ENCODE measurements at regions of chr15 and their contacts with region 1.

Region 1: DNA sequence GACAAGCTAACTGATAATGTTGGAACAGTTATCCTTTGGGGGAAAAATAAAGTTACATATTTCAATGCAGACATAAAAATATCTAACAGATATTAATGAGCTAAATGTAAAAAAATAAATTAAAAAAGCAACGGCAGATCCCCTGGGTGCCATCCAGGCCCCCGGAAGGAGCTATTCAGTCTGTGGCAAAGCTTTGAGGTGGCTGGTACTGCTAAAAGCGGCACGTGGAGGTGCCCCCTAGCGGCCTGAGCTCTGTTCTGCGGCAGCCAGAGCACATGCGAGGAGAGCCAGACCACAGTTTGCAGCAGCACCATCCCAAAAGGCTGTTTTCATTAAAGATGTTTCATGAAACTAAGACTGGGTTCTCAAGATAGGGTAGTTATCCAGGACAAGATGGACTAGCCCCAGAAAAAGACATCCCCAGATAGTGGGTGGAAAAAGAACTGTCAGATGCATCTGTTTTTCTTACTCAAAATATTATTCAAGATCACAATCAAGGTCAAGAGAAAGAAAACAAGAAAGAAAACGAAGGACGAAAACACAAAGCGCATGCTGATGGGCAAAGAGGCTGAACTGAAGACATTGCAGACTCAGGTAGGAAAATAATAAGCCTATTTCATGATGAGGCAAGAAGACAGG is 18.7 kb downstream of the AP3S2 start:
- DNase-seq: peak; percentile 84
- H3K4me3 Mint-ChIP-seq: no peak overlapping the region
- H3K27ac Mint-ChIP-seq: no peak overlapping the region
- H3K4me1 Mint-ChIP-seq: peaks cover 5% of the 10 kb centered on the region
- H3K27me3 Mint-ChIP-seq: no peaks in the 10 kb centered on the region

Region 2: GRCh38 chr15:89740137-89740536 is 134.9 kb before region 1 on chr15:
- CTCF ChIA-PET with region 1: interaction called, 77 read pairs
- POLR2A ChIA-PET with region 1: interaction called, 4 read pairs
- DNase-seq: peak; percentile 55
- H3K4me3 Mint-ChIP-seq: no peak overlapping the region
- H3K27ac Mint-ChIP-seq: no peak overlapping the region
- H3K4me1 Mint-ChIP-seq: peaks cover 1% of the 10 kb centered on the region
- H3K27me3 Mint-ChIP-seq: peaks cover 5% of the 10 kb centered on the region

Region 3: GRCh38 chr15:89760303-89761008 is 114.6 kb before region 1 on chr15:
- CTCF ChIA-PET with region 1: interaction called, 168 read pairs
- POLR2A ChIA-PET with region 1: interaction called, 6 read pairs
- DNase-seq: peak; percentile 77
- H3K4me3 Mint-ChIP-seq: no peak overlapping the region
- H3K27ac Mint-ChIP-seq: no peak overlapping the region
- H3K4me1 Mint-ChIP-seq: peaks cover 6% of the 10 kb centered on the region
- H3K27me3 Mint-ChIP-seq: peaks cover 8% of the 10 kb centered on the region

Region 4: DNA sequence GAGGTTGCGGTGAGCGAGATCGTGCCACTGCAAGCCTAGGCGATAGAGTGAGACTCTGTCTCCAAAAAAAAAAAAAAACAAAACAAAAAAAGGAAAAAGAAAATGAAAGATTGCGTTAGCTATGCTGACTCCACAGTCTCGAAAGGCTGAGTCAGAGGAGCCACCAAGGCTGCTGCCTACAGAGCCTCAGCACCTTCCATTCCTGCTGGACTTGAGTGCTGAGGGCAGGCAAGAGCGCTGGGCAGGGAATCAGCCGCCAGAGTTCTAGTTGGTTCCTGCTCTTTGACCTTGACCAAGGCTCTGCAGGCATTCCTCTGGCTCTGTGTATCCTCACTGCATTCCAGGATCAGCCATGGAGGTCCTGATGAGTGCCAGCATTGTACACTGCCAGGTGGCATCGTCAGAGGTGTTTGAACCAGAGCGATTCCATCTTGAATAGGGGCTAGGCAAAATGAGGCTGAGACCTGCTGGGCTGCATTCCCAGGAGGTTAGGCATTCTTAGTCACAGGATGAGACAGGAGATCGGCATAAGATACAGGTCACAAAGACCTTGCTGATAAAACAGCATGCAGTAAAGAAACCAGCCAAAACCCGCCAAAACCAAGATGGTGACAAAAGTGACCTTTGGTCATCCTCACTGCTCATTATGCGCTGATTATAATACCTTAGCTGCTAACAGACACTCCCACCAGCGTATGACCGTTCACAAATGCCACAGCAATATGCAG is 93.0 kb before region 1 on chr15:
- CTCF ChIA-PET with region 1: interaction called, 13 read pairs
- POLR2A ChIA-PET with region 1: no interaction called
- DNase-seq: peak; percentile 38
- H3K4me3 Mint-ChIP-seq: no peak overlapping the region
- H3K27ac Mint-ChIP-seq: no peak overlapping the region
- H3K4me1 Mint-ChIP-seq: peaks cover 30% of the 10 kb centered on the region
- H3K27me3 Mint-ChIP-seq: no peaks in the 10 kb centered on the region

Region 5: GRCh38 chr15:89857673-89858072 is 17.4 kb before region 1 on chr15:
- CTCF ChIA-PET with region 1: interaction called, 14 read pairs
- POLR2A ChIA-PET with region 1: interaction called, 3 read pairs
- DNase-seq: no peak
- H3K4me3 Mint-ChIP-seq: no peak overlapping the region
- H3K27ac Mint-ChIP-seq: no peak overlapping the region
- H3K4me1 Mint-ChIP-seq: peaks cover 11% of the 10 kb centered on the region
- H3K27me3 Mint-ChIP-seq: no peaks in the 10 kb centered on the region

Region 6: GRCh38 chr15:89893696-89894455 is 18.8 kb after region 1 on chr15 and contains the start of gene AP3S2:
- CTCF ChIA-PET with region 1: interaction called, 119 read pairs
- POLR2A ChIA-PET with region 1: interaction called, 11 read pairs
- DNase-seq: peak; percentile 92
- H3K4me3 Mint-ChIP-seq: peak within 1 kb of the TSS; percentile 91
- H3K27ac Mint-ChIP-seq: peak within 1 kb of the TSS; percentile 88
- H3K4me1 Mint-ChIP-seq: peaks cover 39% of the 10 kb centered on the region
- H3K27me3 Mint-ChIP-seq: no peaks in the 10 kb centered on the region
- total RNA-seq, gene AP3S2: 28.3 to 30.3 TPM